Mammary epithelial cell (primary cell): ENCODE measurements at regions of chr1 and their contacts with region 1.

Region 1: GRCh38 chr1:178055779-178056471 is 38.0 kb upstream of the RASAL2 start:
- DNase-seq: no peak
- H3K4me3 ChIP-seq: no peak overlapping the region
- H3K27ac ChIP-seq: no peak overlapping the region
- H3K4me1 ChIP-seq: peaks cover 43% of the 10 kb centered on the region
- H3K27me3 ChIP-seq: no peaks in the 10 kb centered on the region
- CTCF ChIP-seq: peak in 1 of 2 donors; percentile 22

Region 2: DNA sequence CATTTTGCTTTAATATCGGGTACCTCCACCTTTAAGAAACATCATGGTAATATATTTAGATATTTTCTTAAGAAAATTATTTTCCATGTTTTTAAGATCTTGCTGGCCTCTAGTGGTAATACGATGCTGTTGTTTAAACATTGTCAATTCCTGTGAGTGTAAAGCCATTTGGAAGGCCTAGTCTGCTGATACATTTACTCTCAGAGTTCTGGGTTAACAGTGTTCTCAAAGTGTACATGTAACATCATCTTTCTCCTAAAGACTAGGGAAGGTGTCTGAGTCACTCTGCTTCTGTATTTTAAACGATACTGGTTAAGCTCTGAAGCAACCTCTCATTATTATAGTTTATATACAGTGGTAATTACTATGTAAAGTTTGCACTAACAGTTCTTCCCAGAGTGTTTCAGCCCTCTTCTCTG is 227.0 kb after region 1 on chr1:
- CTCF ChIA-PET with region 1: no interaction called
- dilution Hi-C with region 1: no loop called
- in situ Hi-C with region 1: no loop called
- intact Hi-C with region 1: loop called (anchors 1 kb)
- DNase-seq: peak; percentile 72
- H3K4me3 ChIP-seq: no peak overlapping the region
- H3K27ac ChIP-seq: peak overlapping the region; percentile 55
- H3K4me1 ChIP-seq: peaks cover 29% of the 10 kb centered on the region
- H3K27me3 ChIP-seq: no peaks in the 10 kb centered on the region
- CTCF ChIP-seq: peak; percentile 48 to 56